ENCODE measurements at regions of chr1 and their contacts with region 1.

Region 1: DNA sequence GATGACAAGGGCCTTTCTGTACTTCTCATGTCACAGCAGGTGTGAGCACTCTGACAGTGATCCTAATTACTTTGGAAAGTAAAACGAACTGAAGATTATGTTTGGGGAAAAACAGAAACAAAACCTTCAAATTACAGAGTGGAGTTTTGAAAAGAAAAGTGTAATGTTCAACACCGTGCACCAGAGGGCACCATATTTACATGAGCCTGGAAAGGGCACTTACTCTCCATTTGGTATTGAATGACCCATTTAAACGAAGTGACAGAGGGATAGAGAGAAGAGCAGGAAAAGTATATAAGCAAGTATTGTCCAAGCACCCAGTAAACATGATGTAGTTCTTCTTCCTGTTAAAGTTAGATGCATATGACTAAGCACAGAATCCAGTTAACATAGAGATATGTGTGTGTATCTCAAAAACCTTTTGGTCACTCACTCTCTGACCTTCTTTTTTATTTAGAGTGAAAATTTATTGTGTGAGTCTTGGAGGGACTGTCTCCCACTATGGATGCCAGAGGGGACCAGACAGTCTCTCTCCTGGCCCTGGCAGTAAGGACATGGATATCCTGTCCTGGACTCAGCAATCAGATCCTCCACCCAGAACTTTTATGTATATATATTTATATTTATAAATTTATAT is 3.8 kb upstream of the RGSL1 start:
- DNase-seq: peak; percentile 20 to 37
- H3K4me3 ChIP-seq: no peak overlapping the region
- H3K27ac ChIP-seq: no peak overlapping the region
- H3K4me1 ChIP-seq: no peaks in the 10 kb centered on the region
- H3K27me3 ChIP-seq: no peaks in the 10 kb centered on the region
- CTCF ChIP-seq: peak; percentile 33 to 74 (median 62)
- POLR2A ChIP-seq: no peak

Region 2: DNA sequence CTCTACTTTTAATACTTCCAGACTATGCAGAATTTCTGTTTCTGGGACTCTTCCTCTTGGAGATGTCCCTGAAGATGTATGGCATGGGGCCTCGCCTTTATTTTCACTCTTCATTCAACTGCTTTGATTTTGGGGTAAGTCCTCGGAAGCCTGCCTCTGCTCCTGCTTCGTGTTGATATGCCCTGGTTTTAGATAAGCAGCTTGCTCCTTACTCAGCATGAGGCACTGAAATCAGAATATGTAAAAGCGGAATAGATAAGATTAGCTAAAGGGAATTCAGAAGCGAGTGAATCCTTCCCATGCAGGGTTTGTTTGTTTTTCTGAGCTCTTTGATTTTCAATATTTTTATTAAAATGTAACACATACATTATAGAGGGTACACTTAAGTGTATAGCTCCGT is 728.1 kb before region 1 on chr1:
- intact Hi-C with region 1: no loop called
- DNase-seq: no peak
- H3K4me3 ChIP-seq: no peak overlapping the region
- H3K27ac ChIP-seq: no peak overlapping the region
- H3K4me1 ChIP-seq: no peaks in the 10 kb centered on the region
- H3K27me3 ChIP-seq: no peaks in the 10 kb centered on the region
- CTCF ChIP-seq: no peak
- POLR2A ChIP-seq: no peak

Region 3: DNA sequence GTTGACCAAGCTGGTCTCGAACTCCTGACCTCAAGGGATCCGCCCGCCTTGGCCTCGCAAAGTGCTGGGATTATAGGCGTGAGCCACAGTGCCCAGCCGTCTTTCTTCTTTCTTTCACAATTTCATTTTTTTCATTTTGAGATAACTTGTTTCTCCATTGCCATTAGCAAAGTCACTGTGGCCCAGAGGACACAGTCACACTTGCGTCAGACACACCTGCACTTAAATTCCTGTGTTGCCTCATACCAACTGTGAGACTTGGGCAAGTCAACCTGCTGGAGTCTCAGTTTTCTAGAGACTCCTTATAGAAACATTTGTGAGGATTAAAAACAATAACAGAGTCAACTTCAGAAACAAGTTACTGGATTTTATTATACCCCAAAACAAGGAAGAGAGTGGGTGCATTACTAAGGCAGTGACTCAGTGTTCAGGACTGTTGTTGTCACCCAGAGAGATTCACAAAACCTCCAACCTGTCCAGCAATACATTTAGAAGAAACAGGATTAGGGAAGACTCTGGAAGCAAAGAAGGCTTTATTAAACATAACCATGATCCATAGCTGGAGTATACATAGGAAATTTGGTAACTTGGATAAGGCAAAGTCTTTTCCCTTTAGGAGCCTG is 48.3 kb before region 1 on chr1:
- intact Hi-C with region 1: no loop called
- DNase-seq: peak; percentile 31 to 43
- H3K4me3 ChIP-seq: no peak overlapping the region
- H3K27ac ChIP-seq: peak overlapping the region; percentile 74 to 85 (median 76)
- H3K4me1 ChIP-seq: peaks cover 18 to 21% of the 10 kb centered on the region in 2 donors
- H3K27me3 ChIP-seq: no peaks in the 10 kb centered on the region
- CTCF ChIP-seq: no peak
- POLR2A ChIP-seq: peak in 1 of 2 donors; percentile 19

Region 4: DNA sequence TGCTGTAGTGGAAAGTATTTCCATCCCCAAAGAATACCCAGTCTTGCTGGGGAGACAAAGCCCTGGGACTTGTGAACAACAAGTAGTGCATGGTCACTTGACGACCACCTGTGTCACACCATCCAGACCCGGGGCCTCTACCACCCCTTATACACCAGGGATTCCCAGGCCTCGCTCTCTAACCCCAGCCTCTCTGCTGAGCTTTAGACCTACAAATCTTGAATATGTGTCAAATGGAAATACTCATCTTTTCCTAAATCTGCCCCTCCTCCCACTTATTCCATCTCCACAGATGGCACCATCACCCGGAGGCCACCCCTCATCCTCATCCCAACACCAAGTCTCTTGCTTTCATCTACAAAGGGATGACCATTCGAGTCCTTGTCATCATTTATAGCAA is 143.8 kb after region 1 on chr1:
- intact Hi-C with region 1: loop called (anchors 5 kb)
- DNase-seq: no peak
- H3K4me3 ChIP-seq: no peak overlapping the region
- H3K27ac ChIP-seq: peak overlapping the region in 2 of 3 donors; percentile 93 to 99
- H3K4me1 ChIP-seq: peaks cover 0 to 14% of the 10 kb centered on the region in 2 donors
- H3K27me3 ChIP-seq: no peaks in the 10 kb centered on the region
- CTCF ChIP-seq: no peak
- POLR2A ChIP-seq: no peak

Region 5: DNA sequence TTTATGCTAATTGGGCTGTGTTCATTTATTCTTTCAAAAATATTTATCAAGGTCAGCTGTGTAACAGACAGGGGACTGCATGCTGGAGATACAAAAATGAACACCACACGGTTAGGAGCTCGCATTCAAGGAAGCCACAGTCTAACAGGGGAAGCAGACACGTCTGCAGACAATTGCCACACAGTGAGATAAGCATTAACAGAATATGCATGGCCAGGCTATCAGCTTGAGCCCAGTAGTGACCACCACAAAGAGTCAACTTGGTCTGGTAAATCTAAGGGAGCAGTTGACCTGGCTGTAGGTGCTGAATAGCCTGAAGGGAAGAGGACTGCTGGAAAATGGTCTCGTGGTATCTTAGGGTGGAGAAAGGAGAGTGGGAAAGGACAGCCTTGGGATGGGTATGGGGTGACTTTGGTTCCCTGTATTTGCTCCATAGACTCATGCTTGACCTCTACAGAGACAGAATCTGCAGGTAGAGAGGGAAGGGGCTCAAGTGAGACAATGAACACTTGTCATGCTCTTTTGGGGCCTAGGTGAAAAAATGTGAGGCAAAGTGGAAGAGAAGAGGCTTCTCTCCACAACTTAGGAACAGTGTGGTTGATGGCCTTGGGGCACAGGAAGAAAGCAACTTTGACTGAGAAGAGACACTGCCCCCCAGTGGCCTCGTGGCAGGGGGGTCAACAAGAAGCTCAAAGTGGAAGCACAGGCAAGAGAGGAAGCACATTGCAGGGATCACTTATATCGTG is 335.9 kb after region 1 on chr1:
- intact Hi-C with region 1: loop called (anchors 2 kb)
- DNase-seq: peak; percentile 85 to 88
- H3K4me3 ChIP-seq: no peak overlapping the region
- H3K27ac ChIP-seq: peak overlapping the region in 1 of 3 donors; percentile 3
- H3K4me1 ChIP-seq: peaks cover 3 to 10% of the 10 kb centered on the region in 2 donors
- H3K27me3 ChIP-seq: no peaks in the 10 kb centered on the region
- CTCF ChIP-seq: peak; percentile 66 to 87 (median 82)
- POLR2A ChIP-seq: no peak

Measured in thyroid gland (tissue), 4 donors.